Right ventricle myocardium superior (tissue), 1 donor: ENCODE measurements at regions of chr18 and their contacts with region 1.

Region 1: GRCh38 chr18:830315-830901 is 18.4 kb upstream of the YES1 start:
- DNase-seq: no peak
- ATAC-seq: peak; percentile 70

Region 2: GRCh38 chr18:741931-742512 is 88.4 kb before region 1 on chr18:
- intact Hi-C with region 1: loop called (anchors 2 kb)
- DNase-seq: no peak
- ATAC-seq: peak; percentile 88